Right ventricle myocardium superior (tissue), 1 donor: ENCODE measurements at regions of chr10 and their contacts with region 1.

Region 1: GRCh38 chr10:689433-690371 is at the start of gene DIP2C:
- DNase-seq: peak; percentile 85
- ATAC-seq: peak; percentile 87
- total RNA-seq, gene DIP2C: 29.1 TPM

Region 2: DNA sequence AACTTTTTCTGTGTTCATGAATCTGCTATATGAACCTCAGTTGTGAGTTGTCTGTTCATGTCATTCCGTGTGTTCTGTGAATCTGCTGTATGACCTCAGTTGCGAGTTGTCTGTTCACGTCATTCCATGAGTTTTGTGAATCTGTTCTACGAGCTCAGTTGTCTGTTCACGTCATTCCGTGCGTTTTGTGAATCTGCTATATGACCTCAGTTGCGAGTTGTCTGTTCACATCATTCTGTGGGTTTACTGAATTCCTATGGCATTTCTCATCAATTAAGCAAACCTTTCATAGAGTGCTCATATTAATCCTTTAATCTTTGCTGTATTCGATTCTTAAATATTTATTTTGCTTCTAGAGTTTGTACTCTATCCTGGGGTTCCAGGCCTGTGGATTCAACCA is 150.8 kb before region 1 on chr10:
- intact Hi-C with region 1: loop called (anchors 10 kb)
- DNase-seq: no peak
- ATAC-seq: no peak